A673 (cell line): ENCODE measurements at regions of chr3 and their contacts with region 1.

Region 1: GRCh38 chr3:147383617-147384016 is 22.7 kb downstream of the ZIC4 start:
- DNase-seq: peak; percentile 51
- H3K4me3 ChIP-seq: no peak overlapping the region
- H3K27ac ChIP-seq: no peak overlapping the region
- H3K4me1 ChIP-seq: peaks cover 3% of the 10 kb centered on the region
- H3K27me3 ChIP-seq: peaks cover 59% of the 10 kb centered on the region
- CTCF ChIP-seq: peak; percentile 71

Region 2: GRCh38 chr3:146830231-146830630 is 553.4 kb before region 1 on chr3:
- CTCF ChIA-PET with region 1: no interaction called
- POLR2A ChIA-PET with region 1: no interaction called
- intact Hi-C with region 1: no loop called
- DNase-seq: no peak
- H3K4me3 ChIP-seq: no peak overlapping the region
- H3K27ac ChIP-seq: no peak overlapping the region
- H3K4me1 ChIP-seq: no peaks in the 10 kb centered on the region
- H3K27me3 ChIP-seq: no peaks in the 10 kb centered on the region
- CTCF ChIP-seq: no peak

Region 3: DNA sequence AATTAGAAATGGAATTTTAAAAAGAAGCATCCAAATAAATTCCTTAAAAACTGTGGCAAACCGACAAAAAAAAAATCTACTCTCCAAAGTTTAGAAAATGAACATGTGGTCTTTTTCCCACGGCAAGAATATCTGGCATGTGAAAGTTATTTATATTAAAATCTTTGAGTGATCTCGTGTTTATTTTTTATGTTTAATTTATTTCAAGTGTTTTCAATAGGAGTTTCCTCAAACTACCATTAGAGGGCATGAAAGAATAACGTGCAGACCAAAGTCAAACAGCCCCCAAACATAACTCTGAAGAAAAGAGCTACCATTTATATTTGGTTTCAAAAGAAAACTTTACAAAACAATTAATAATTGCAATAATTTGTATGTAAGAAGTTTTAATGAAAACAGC is 263.6 kb before region 1 on chr3:
- CTCF ChIA-PET with region 1: no interaction called
- POLR2A ChIA-PET with region 1: no interaction called
- intact Hi-C with region 1: no loop called
- DNase-seq: peak; percentile 47
- H3K4me3 ChIP-seq: no peak overlapping the region
- H3K27ac ChIP-seq: no peak overlapping the region
- H3K4me1 ChIP-seq: no peaks in the 10 kb centered on the region
- H3K27me3 ChIP-seq: no peaks in the 10 kb centered on the region
- CTCF ChIP-seq: peak; percentile 72

Region 4: GRCh38 chr3:147361454-147362420 is 21.9 kb before region 1 on chr3:
- CTCF ChIA-PET with region 1: no interaction called
- POLR2A ChIA-PET with region 1: no interaction called
- intact Hi-C with region 1: no loop called
- DNase-seq: peak; percentile 81
- H3K4me3 ChIP-seq: no peak overlapping the region
- H3K27ac ChIP-seq: no peak overlapping the region
- H3K4me1 ChIP-seq: peaks cover 9% of the 10 kb centered on the region
- H3K27me3 ChIP-seq: peaks cover 95% of the 10 kb centered on the region
- CTCF ChIP-seq: peak; percentile 91

Region 5: GRCh38 chr3:147398813-147399534 is 15.4 kb after region 1 on chr3:
- CTCF ChIA-PET with region 1: interaction called, 10 read pairs
- POLR2A ChIA-PET with region 1: no interaction called
- intact Hi-C with region 1: no loop called
- DNase-seq: no peak
- H3K4me3 ChIP-seq: no peak overlapping the region
- H3K27ac ChIP-seq: no peak overlapping the region
- H3K4me1 ChIP-seq: no peaks in the 10 kb centered on the region
- H3K27me3 ChIP-seq: peaks cover 78% of the 10 kb centered on the region
- CTCF ChIP-seq: no peak

Region 6: DNA sequence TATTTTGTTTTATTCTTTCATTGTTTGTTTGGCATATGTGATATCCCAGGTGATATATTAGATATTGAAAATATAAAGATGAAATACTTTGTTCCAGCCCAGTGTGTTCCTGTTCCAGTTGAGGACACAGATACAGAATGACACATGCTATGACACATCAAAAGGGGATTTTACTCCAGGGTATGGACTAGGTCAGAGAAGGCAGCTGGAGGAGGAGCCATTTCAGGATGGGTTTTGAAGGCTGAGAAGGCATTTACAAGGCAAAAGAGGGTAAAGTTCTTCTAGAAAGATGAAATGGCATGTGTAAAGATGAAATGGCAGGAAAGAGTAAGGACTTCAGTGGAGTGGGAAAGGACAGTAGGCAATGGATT is 189.3 kb after region 1 on chr3:
- CTCF ChIA-PET with region 1: no interaction called
- POLR2A ChIA-PET with region 1: no interaction called
- intact Hi-C with region 1: no loop called
- DNase-seq: no peak
- H3K4me3 ChIP-seq: no peak overlapping the region
- H3K27ac ChIP-seq: no peak overlapping the region
- H3K4me1 ChIP-seq: no peaks in the 10 kb centered on the region
- H3K27me3 ChIP-seq: no peaks in the 10 kb centered on the region
- CTCF ChIP-seq: no peak

Region 7: GRCh38 chr3:147616998-147617619 is 233.5 kb after region 1 on chr3:
- CTCF ChIA-PET with region 1: interaction called, 5 read pairs
- POLR2A ChIA-PET with region 1: no interaction called
- intact Hi-C with region 1: loop called (anchors 5 kb)
- DNase-seq: peak; percentile 62
- H3K4me3 ChIP-seq: no peak overlapping the region
- H3K27ac ChIP-seq: no peak overlapping the region
- H3K4me1 ChIP-seq: peaks cover 22% of the 10 kb centered on the region
- H3K27me3 ChIP-seq: no peaks in the 10 kb centered on the region
- CTCF ChIP-seq: peak; percentile 77

Region 8: DNA sequence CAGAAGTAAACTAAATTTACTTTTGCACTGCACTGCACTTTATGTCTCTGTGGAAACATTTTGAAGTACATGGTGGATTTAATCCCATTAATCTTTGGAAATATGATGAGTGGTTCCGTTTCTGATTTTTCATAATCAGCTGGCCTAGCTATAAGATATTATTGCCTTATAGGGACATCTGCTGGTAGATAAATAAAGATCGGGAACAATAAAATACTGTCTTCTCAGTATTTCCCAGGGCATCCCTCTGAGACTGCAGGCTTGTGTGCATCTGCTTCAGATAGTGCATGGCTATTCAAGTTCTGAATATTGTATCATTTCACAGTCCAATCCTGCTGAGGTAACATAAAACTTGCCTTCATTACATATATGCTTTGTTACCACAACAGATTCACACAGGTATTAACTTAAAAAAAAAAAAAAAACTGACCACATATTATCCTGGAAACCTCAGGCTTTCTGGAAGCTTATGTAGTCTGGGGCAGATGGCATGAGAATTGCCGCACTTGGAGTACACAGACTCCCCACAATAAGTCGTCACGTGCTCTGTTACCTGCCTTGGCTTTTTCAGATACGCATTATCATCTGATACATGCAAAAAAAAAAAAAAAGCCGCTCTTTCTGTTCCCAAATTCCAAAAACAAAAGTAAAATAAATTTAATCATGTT is 983.3 kb after region 1 on chr3:
- CTCF ChIA-PET with region 1: no interaction called
- POLR2A ChIA-PET with region 1: no interaction called
- intact Hi-C with region 1: loop called (anchors 10 kb)
- DNase-seq: peak; percentile 35
- H3K4me3 ChIP-seq: no peak overlapping the region
- H3K27ac ChIP-seq: no peak overlapping the region
- H3K4me1 ChIP-seq: no peaks in the 10 kb centered on the region
- H3K27me3 ChIP-seq: no peaks in the 10 kb centered on the region
- CTCF ChIP-seq: peak; percentile 44; the same call in 1 of the 2 replicates